Endothelial cell of umbilical vein (primary cell): ENCODE measurements at regions of chr15 and their contacts with region 1.

Region 1: DNA sequence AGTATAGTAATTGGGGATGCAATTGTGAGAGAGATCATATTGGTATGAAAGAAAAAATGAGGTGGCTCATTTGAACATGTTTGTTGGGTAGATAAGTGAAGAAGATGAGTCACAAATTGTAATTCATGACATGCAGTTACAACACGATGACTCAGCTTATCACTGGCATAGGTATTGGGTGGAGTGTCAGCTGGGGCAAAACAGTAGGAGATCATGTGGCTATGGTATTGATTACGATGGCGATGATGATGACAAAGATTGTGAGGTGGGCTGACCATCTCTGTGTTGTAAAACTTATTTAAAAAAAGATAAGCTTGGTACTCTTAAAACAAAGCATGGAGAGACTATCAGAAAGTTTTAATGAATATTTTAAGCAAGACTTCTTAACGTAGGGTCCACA is 11.6 kb upstream of the DPH6 start:
- DNase-seq: no peak
- H3K4me3 ChIP-seq: no peak overlapping the region
- H3K27ac ChIP-seq: no peak overlapping the region
- H3K4me1 ChIP-seq: no peaks in the 10 kb centered on the region
- H3K27me3 ChIP-seq: no peaks in the 10 kb centered on the region
- CTCF ChIP-seq: no peak
- POLR2A ChIP-seq: no peak

Region 2: DNA sequence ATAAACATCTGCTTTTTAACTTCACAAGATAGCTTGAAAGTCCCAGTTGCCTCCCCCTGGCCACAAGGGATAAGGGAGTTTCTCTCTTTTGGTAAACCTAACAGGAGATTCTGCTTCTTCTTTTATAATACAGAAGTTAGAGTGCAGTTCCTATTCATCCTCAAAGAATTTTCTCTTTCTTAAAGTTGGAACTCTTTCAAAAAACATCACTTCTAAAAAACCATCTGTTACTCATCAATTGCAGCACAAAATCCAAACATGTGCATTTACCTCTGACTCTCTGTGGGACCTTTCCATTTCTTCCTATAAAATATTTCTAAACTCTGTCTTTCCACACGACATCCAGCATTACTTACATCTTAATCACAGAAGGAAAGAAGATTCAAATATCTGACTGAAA is 16.7 kb before region 1 on chr15:
- CTCF ChIA-PET with region 1: no interaction called
- POLR2A ChIA-PET with region 1: no interaction called
- dilution Hi-C with region 1: no loop called
- intact Hi-C with region 1: loop called (anchors 1 kb)
- DNase-seq: no peak
- H3K4me3 ChIP-seq: no peak overlapping the region
- H3K27ac ChIP-seq: no peak overlapping the region
- H3K4me1 ChIP-seq: peaks cover 10% of the 10 kb centered on the region
- H3K27me3 ChIP-seq: no peaks in the 10 kb centered on the region
- CTCF ChIP-seq: no peak
- POLR2A ChIP-seq: no peak